Activated naive CD4-positive, alpha-beta T cell treated with anti-CD3 and anti-CD28 coated beads for 36 hours (primary cell): ENCODE measurements at regions of chr9 and their contacts with region 1.

Region 1: DNA sequence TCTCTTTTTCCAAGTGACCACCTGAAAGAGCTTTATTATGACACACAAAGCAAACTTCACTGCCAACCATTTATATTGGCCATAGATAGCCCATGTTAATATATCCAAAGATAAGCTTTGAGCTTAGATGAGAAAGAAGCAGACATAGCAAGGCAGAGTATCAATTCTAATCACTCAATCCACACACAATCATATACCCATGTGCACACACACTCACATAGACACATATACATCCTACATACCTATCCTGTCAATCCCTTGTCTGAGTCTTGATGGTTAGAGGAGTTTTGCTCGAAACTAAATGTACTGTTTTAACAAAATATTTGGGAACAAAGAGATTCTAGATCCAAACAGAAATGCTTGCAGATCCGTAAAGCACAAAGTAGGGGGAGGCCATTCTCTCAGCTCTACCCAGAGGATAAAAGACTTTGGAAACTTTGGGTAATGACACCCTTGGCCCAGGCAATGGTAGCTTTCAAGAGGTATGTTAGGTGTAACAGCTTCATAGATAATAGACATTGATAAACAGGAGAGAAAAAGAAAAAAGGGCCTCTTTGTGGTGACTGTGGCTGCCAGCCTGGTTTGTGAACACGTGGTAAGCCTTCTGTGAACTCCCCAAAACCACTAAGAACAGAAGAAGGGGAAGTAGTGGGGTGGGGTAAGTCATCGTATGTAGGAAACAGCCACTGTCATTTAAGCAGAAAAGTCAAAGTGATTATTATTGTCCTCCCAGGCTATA is 121.6 kb downstream of the TLR4 start:
- DNase-seq: peak; percentile 71
- H3K4me3 Mint-ChIP-seq: no peak overlapping the region
- H3K27ac Mint-ChIP-seq: no peak overlapping the region
- H3K4me1 Mint-ChIP-seq: peaks cover 33% of the 10 kb centered on the region
- H3K27me3 Mint-ChIP-seq: peaks cover 40% of the 10 kb centered on the region

Region 2: GRCh38 chr9:117835798-117836197 is 10.0 kb after region 1 on chr9:
- CTCF ChIA-PET with region 1: no interaction called
- intact Hi-C with region 1: loop called (anchors 1 kb)
- DNase-seq: no peak
- H3K4me3 Mint-ChIP-seq: no peak overlapping the region
- H3K27ac Mint-ChIP-seq: no peak overlapping the region
- H3K4me1 Mint-ChIP-seq: peaks cover 4% of the 10 kb centered on the region
- H3K27me3 Mint-ChIP-seq: peaks cover 30% of the 10 kb centered on the region

Region 3: GRCh38 chr9:118222375-118222774 is 396.6 kb after region 1 on chr9:
- CTCF ChIA-PET with region 1: no interaction called
- intact Hi-C with region 1: no loop called
- DNase-seq: no peak
- H3K4me3 Mint-ChIP-seq: no peak overlapping the region
- H3K27ac Mint-ChIP-seq: no peak overlapping the region
- H3K4me1 Mint-ChIP-seq: no peaks in the 10 kb centered on the region
- H3K27me3 Mint-ChIP-seq: peaks cover 6% of the 10 kb centered on the region